ENCODE measurements at regions of chrX and their contacts with region 1.

Region 1: GRCh38 chrX:120603707-120604360 is at the start of gene MCTS1:
- DNase-seq: peak; percentile 90
- H3K4me3 ChIP-seq: peak within 1 kb of the TSS; percentile 88
- H3K27ac ChIP-seq: peak within 1 kb of the TSS; percentile 89
- H3K4me1 ChIP-seq: peaks cover 11% of the 10 kb centered on the region
- CTCF ChIP-seq: no peak
- total RNA-seq, gene MCTS1: 29.1 and 34.5 TPM in 2 replicates

Region 2: DNA sequence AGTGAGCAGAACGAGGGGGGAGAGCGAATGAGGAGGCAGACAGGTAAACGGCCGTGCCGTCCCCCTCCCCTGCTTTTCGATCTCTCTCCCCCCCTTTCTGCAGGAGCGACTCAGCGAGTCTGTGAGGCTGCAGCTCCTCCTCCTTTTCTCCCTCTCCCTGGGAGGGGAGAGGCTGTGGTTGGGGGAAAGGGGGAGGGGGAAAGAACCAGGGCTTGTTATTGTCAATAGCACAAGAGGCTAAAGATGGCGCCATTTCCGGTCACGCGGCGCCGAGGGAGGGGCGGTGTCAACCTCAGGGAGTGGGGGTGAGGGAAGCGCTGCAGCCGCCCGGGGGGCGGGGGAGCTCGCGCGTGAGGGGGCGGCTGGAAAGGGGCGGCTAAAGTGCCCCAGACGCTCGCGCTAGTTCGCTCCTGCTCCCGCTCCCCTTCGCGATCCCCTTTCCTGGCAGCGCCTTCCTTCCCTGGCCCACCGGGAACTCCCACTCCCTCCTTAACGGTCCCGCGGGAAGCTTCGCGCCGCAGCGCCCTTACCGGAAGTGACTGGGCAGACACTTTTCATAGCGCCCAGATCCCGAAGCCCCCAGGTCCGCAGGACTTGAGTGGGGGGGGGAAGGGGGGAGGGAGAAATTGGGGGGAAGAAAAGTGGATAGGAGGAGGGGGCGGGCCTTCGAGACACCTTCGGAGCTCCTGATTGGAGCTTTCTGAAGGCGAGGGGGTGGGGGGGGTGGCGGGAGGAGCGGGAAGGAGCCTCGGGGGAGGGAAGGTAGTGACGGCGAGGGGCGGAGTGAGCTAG is 42.8 kb before region 1 on chrX and contains the start of gene CUL4B:
- CTCF ChIA-PET with region 1: interaction called, 4 read pairs
- POLR2A ChIA-PET with region 1: interaction called, 18 read pairs
- intact Hi-C with region 1: loop called (anchors 1 kb)
- DNase-seq: peak; percentile 90
- H3K4me3 ChIP-seq: peak within 1 kb of the TSS; percentile 90
- H3K27ac ChIP-seq: peak within 1 kb of the TSS; percentile 85
- H3K4me1 ChIP-seq: peaks cover 22% of the 10 kb centered on the region
- CTCF ChIP-seq: no peak
- total RNA-seq, gene CUL4B: 13.5 and 15.5 TPM in 2 replicates

Region 3: GRCh38 chrX:120629667-120630537 is 26.1 kb after region 1 on chrX and contains the start of gene C1GALT1C1:
- CTCF ChIA-PET with region 1: interaction called, 3 read pairs
- POLR2A ChIA-PET with region 1: interaction called, 5 read pairs
- intact Hi-C with region 1: loop called (anchors 2 kb)
- DNase-seq: peak; percentile 94
- H3K4me3 ChIP-seq: peak within 1 kb of the TSS; percentile 74
- H3K27ac ChIP-seq: peak within 1 kb of the TSS; percentile 81
- H3K4me1 ChIP-seq: peaks cover 41% of the 10 kb centered on the region
- CTCF ChIP-seq: peak; percentile 51
- total RNA-seq, gene C1GALT1C1: 16.5 and 16.8 TPM in 2 replicates

Measured in OCI-LY7 (cell line).